T-cell (primary cell): ENCODE measurements at regions of chr1 and their contacts with region 1.

Region 1: DNA sequence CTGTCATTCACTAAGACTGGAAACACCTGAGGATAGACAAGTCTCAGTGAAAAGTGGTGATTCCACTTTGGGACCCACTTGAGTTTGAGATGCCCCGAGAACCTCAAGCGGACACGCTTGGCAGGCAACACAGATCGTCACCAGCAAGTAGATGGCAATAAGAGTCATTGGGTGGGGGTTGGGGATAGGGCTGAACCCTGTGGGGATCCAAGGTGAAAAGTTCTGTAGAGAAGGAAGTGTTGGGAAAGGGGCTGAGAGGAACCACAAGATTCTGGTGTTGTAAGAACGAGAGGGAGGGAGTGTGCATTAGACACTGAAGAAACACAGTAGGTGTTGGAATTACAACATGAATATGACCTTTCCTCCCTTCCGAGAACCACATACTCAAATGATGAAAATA is 45.4 kb upstream of the TDRD10 start:
- DNase-seq: no peak
- ATAC-seq: no peak
- H3K4me3 ChIP-seq: no peak overlapping the region
- H3K4me3 Mint-ChIP-seq: no peak overlapping the region
- H3K27ac ChIP-seq: no peak overlapping the region
- H3K27ac Mint-ChIP-seq: peak overlapping the region; percentile 8 to 52
- H3K4me1 ChIP-seq: peaks cover 10 to 36% of the 10 kb centered on the region in 2 experiments
- H3K4me1 Mint-ChIP-seq: peaks cover 41 to 47% (median 44%) of the 10 kb centered on the region in 3 donors
- H3K27me3 ChIP-seq: no peaks in the 10 kb centered on the region
- H3K27me3 Mint-ChIP-seq: no peaks in the 10 kb centered on the region

Region 2: GRCh38 chr1:154524881-154525280 is 68.2 kb after region 1 on chr1:
- CTCF ChIA-PET with region 1: interaction called in 1 of 2 experiments, 12 read pairs
- POLR2A ChIA-PET with region 1: no interaction called
- DNase-seq: no peak
- ATAC-seq: no peak
- H3K4me3 ChIP-seq: no peak overlapping the region
- H3K4me3 Mint-ChIP-seq: no peak overlapping the region
- H3K27ac ChIP-seq: no peak overlapping the region
- H3K27ac Mint-ChIP-seq: peak overlapping the region in 1 of 2 donors; percentile 43
- H3K4me1 ChIP-seq: no peaks in the 10 kb centered on the region
- H3K4me1 Mint-ChIP-seq: no peaks in the 10 kb centered on the region
- H3K27me3 ChIP-seq: peaks cover 0 to 10% of the 10 kb centered on the region in 2 experiments
- H3K27me3 Mint-ChIP-seq: peaks cover 0 to 14% of the 10 kb centered on the region in 2 donors